Activated CD4-positive, alpha-beta T cell treated with anti-CD3 and anti-CD28 coated beads for 36 hours (primary cell): ENCODE measurements at regions of chr2 and their contacts with region 1.

Region 1: DNA sequence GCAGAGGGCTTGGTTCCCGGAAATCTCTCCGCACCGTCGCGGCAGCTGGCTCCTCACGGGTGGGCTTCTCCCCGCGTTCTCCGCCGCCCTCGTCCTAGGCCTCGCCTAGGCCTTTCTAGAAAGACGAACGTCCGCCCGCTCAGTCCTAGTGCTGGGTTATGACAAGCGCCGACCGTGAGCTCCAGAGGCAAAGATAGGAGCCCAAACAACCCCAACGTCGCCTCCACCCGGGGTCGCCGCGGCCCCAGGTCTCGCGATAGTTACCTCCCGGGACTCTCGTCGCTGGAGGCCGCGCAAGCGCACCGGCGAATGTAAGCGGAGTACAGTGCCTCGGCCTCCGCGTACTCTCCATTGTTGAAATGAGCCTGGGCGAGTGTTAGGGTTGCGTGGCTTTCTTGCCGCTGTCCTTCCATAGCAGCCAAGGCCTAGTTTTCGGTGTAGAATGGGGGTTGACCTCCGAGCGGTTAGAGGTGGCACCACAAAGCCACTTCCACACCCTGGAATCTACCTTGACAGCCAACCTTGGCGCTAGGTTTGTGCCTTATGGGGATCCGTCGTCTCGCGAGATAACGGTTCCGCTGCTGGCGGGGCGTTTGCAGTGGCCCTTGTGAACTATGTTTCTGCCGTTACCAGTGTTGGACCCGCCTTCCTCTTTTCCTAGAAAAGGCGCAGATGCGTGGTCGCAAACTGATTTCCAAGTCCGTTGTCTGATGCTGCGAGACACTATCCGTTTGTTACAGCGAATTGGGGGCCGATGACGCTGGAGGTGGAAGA is at the start of gene TTC32:
- DNase-seq: peak; percentile 95
- ATAC-seq: peak; percentile 88
- H3K4me3 Mint-ChIP-seq: peak within 1 kb of the TSS; percentile 84
- H3K27ac Mint-ChIP-seq: peak within 1 kb of the TSS; percentile 93
- H3K4me1 Mint-ChIP-seq: peaks cover 46% of the 10 kb centered on the region
- H3K27me3 Mint-ChIP-seq: peaks cover 11% of the 10 kb centered on the region
- total RNA-seq, gene TTC32: 8.8 to 15.7 TPM

Region 2: GRCh38 chr2:18560031-18560796 is 1341.4 kb before region 1 on chr2 and contains the start of gene RDH14:
- CTCF ChIA-PET with region 1: no interaction called
- POLR2A ChIA-PET with region 1: no interaction called
- intact Hi-C with region 1: loop called (anchors 1 kb)
- DNase-seq: peak; percentile 94
- ATAC-seq: peak; percentile 94
- H3K4me3 Mint-ChIP-seq: peak within 1 kb of the TSS; percentile 84
- H3K27ac Mint-ChIP-seq: peak within 1 kb of the TSS; percentile 90
- H3K4me1 Mint-ChIP-seq: peaks cover 32% of the 10 kb centered on the region
- H3K27me3 Mint-ChIP-seq: no peaks in the 10 kb centered on the region
- total RNA-seq, gene RDH14: 16.1 to 18.3 TPM

Region 3: GRCh38 chr2:19868705-19869580 is 32.7 kb before region 1 on chr2:
- CTCF ChIA-PET with region 1: interaction called, 4 read pairs
- POLR2A ChIA-PET with region 1: no interaction called
- intact Hi-C with region 1: loop called in 1 of 2 experiments (anchors 2 kb)
- DNase-seq: peak; percentile 73
- ATAC-seq: peak; percentile 88
- H3K4me3 Mint-ChIP-seq: peak overlapping the region; percentile 76
- H3K27ac Mint-ChIP-seq: peak overlapping the region; percentile 87
- H3K4me1 Mint-ChIP-seq: peaks cover 20% of the 10 kb centered on the region
- H3K27me3 Mint-ChIP-seq: no peaks in the 10 kb centered on the region

Region 4: DNA sequence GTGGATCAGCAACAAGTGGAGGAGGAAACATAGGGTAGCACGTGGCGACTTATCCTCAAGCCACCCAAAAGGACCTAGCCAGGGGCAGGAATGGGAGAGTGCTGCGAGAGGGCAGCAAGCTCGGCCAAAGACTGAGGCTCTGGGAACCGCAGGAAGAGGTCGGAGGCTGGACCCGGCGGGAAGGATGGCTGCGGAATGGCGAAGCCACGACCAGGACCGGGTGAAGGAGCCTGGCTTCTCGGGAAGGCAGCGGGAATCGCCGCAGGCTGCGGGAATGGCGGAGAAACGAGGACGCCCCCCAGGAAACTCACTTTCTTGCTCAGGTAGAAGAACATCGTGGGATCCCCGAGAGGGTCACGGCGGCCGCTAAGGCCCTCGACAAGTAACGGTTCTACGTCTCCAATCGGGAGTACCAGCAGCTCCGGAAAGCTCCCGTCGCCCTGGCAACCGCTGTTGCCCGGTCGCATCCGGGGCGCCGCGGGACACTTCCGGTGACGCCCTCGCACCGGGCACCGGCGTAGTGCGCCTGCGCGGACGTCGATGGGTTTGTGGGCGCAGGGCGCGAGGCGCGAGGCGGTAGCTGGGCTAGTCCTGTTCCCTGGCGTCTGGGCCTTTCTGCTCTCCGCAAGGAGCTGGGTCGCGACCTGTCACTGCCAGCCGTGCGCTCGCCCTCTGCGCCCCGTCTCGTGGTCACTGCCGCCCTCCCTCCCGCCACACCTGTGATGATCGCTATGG is 88.2 kb after region 1 on chr2 and contains the start of gene WDR35:
- CTCF ChIA-PET with region 1: no interaction called
- POLR2A ChIA-PET with region 1: no interaction called
- intact Hi-C with region 1: loop called in 1 of 2 experiments (anchors 2 kb)
- DNase-seq: peak; percentile 95
- ATAC-seq: peak; percentile 97
- H3K4me3 Mint-ChIP-seq: peak within 1 kb of the TSS; percentile 90
- H3K27ac Mint-ChIP-seq: peak within 1 kb of the TSS; percentile 75
- H3K4me1 Mint-ChIP-seq: peaks cover 28% of the 10 kb centered on the region
- H3K27me3 Mint-ChIP-seq: peaks cover 12% of the 10 kb centered on the region
- total RNA-seq, gene WDR35: 6.2 to 7.4 TPM

Region 5: DNA sequence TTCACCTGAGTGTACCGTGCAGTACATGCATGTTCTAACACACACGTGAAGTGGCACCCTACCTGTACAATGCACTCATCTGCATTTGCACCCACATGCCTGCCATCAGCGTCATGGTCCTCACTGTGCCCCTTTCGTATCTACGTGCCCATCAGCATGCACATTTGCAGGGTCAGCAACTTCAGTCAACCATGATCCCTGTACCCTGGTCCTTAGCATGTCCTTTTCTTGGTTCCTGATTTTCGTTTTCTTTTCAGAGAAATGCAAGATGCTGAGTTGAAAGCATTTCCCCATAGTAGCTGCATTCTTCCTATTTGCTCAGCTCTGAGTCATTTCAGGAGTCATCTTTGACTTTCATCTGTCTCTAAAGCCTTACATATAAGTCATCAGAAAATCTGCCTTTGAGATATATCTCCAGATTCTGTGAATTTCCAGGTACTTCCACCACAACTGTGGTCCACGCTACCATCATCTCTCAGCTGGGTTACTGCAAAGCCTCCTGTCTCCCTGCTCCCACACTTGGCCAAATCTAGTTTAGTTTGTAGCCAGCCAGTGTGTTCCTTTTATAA is 463.7 kb after region 1 on chr2:
- CTCF ChIA-PET with region 1: no interaction called
- POLR2A ChIA-PET with region 1: interaction called, 3 read pairs
- intact Hi-C with region 1: loop called in 1 of 2 experiments (anchors 5 kb)
- DNase-seq: peak; percentile 80
- ATAC-seq: peak; percentile 69
- H3K4me3 Mint-ChIP-seq: peak overlapping the region; percentile 3
- H3K27ac Mint-ChIP-seq: peak overlapping the region; percentile 86
- H3K4me1 Mint-ChIP-seq: peaks cover 26% of the 10 kb centered on the region
- H3K27me3 Mint-ChIP-seq: peaks cover 13% of the 10 kb centered on the region

Region 6: GRCh38 chr2:20650880-20651730 is 749.5 kb after region 1 on chr2 and contains the start of gene HS1BP3:
- CTCF ChIA-PET with region 1: no interaction called
- POLR2A ChIA-PET with region 1: no interaction called
- intact Hi-C with region 1: loop called in 1 of 2 experiments (anchors 2 kb)
- DNase-seq: peak; percentile 92
- ATAC-seq: peak; percentile 97
- H3K4me3 Mint-ChIP-seq: peak within 1 kb of the TSS; percentile 78
- H3K27ac Mint-ChIP-seq: peak within 1 kb of the TSS; percentile 86
- H3K4me1 Mint-ChIP-seq: peaks cover 22% of the 10 kb centered on the region
- H3K27me3 Mint-ChIP-seq: no peaks in the 10 kb centered on the region
- total RNA-seq, gene HS1BP3: 6.2 to 7.1 TPM

Region 7: DNA sequence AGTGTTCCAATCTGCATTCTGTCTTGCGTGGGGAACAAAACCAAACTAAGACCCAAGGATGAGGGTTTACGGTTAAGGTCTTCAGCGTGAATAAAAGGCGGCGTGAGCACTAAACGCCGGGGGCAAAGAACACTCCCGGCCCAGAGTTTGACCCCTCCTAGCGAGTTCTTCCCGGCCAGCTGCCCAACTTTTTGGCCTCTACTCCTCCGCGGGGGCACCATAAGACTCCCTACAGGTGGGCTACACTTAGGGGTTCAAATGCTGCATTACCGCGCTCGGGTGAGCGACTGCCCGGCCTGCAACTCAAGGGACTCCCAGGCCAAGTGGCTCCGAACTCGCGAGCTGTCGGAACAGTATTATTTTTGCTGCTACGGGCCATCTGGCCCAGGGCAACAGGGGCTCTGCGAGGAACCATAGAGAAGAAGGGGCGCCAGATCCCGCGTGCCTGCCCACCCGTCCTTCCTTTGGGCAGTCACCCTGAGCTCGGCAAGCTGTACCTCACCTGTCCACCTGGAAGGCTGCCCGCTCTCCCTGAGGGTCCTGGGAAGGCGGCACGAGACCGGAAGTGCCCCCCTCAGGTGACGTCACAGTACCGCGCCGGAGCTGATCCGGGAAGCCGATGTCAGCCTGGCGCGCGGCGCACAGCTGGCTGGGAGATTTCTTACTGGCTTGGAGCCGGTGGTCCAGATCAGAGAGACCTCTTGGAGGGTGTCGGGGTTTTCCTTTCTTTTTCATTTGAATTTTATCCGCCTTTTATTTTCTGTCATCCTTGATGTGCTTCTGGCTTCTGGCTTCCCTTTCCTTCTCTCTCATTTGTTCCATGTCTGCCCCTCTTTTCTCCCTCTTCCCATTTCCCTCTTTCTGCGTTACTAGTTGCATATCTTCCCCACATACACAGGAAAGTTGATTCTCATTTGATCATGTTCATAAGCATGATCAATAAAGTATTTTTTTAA is 921.2 kb after region 1 on chr2 and contains the start of gene LDAH:
- CTCF ChIA-PET with region 1: no interaction called
- POLR2A ChIA-PET with region 1: no interaction called
- intact Hi-C with region 1: loop called (anchors 2 to 5 kb)
- DNase-seq: peak; percentile 92
- ATAC-seq: peak; percentile 79
- H3K4me3 Mint-ChIP-seq: peak within 1 kb of the TSS; percentile 98
- H3K27ac Mint-ChIP-seq: peak within 1 kb of the TSS; percentile 99
- H3K4me1 Mint-ChIP-seq: peaks cover 26% of the 10 kb centered on the region
- H3K27me3 Mint-ChIP-seq: no peaks in the 10 kb centered on the region
- total RNA-seq, gene LDAH: 27.0 to 32.8 TPM